Activated CD4-positive, alpha-beta T cell treated with anti-CD3 and anti-CD28 coated beads for 36 hours (primary cell): ENCODE measurements at regions of chr12 and their contacts with region 1.

Region 1: DNA sequence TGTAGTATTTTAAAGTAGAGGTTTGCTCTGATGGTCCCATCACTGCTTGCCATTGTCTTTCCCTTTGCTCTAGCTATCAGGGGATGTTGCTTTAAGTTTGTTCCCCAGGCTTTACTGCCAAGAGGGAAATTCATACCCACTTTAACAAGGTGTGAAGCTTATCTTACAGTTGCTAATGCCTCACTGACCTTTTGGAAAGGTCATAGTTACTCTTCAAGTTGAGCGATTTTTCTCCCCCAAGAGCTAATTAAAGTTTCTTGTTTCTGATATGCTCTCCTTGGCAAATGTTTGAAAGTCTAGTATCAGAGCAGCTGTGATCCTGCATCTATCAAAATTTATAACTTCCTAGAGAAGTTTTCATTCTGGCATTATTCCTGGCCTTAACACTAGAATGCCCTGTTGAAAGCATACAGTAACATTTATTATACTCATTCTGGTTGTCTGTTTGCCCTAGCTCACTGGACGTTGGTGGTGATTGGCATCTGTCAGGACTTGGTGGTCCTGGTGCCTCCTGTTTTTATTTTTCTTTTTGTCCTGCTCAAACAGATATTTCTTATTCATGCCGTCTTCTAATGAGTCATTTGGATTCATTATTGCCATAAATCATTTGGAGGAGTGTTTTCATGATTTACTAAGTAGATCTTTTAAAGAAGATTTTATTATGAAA is 8.1 kb downstream of the ATP2A2 start:
- DNase-seq: no peak
- ATAC-seq: no peak
- H3K4me3 Mint-ChIP-seq: no peak overlapping the region
- H3K27ac Mint-ChIP-seq: no peak overlapping the region
- H3K4me1 Mint-ChIP-seq: peaks cover 57% of the 10 kb centered on the region
- H3K27me3 Mint-ChIP-seq: no peaks in the 10 kb centered on the region

Region 2: GRCh38 chr12:110330544-110330943 is 41.4 kb after region 1 on chr12:
- CTCF ChIA-PET with region 1: interaction called, 3 read pairs
- POLR2A ChIA-PET with region 1: no interaction called
- intact Hi-C with region 1: loop called in 1 of 2 experiments (anchors 5 kb)
- DNase-seq: no peak
- ATAC-seq: no peak
- H3K4me3 Mint-ChIP-seq: no peak overlapping the region
- H3K27ac Mint-ChIP-seq: no peak overlapping the region
- H3K4me1 Mint-ChIP-seq: peaks cover 5% of the 10 kb centered on the region
- H3K27me3 Mint-ChIP-seq: no peaks in the 10 kb centered on the region